ENCODE measurements at regions of chr5 and their contacts with region 1.

Region 1: DNA sequence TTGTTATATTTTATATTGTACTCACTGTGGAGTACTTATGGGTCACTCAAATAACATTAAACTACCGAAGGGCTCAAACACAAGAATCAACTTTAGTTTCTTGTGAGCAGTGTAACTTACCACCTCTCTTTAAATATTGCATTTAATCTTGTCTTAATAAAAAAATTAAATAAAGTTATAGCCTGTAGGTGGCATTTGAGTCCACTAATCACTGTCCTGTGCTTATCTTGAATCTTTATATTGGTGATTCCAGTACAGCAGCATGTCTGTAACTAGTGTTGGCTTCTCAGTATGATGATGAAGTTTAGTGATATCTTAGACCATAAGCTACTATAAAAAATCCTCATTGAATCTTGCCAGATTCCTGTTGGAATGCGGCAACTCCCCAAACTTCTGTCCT is 313.8 kb downstream of the FAM170A start:
- DNase-seq: no peak
- H3K4me3 ChIP-seq: no peak overlapping the region
- H3K27ac ChIP-seq: no peak overlapping the region
- H3K4me1 ChIP-seq: no peaks in the 10 kb centered on the region
- H3K27me3 ChIP-seq: no peaks in the 10 kb centered on the region
- CTCF ChIP-seq: peak in 1 of 3 experiments; percentile 19
- EP300 ChIP-seq: no peak
- POLR2A ChIP-seq: no peak

Region 2: DNA sequence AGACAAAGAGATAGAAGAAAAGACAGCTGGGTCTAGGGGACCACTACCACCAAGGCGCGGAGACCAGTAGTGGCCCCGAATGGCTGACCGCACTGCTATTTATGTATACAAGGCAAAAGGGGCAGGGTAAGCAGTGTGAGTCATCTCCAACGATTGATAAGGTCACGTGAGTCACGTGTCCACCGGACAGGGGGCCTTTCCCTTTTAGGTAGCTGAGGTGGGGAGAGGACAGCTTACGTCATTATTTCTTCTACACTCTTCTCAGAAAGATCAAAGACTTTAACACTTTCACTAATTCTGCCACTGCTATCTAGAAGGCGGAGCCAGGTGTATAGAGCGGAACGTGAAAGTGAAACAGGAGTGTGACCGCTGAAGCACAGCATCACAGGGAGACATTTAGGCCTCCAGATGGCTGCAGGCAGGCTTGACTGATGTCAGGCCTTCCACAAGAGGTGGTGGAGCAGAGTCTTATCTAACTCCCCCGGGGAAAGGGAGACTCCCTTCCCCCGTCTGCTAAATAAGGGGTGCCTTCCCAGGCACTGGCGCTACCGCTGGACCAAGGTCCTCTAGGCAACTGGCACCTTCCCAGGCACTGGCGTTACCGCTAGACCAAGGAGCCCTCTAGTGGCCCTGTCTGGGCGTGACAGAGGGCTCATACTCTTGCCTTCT is 514.8 kb after region 1 on chr5:
- intact Hi-C with region 1: loop called (anchors 10 kb)
- DNase-seq: no peak
- H3K4me3 ChIP-seq: peak overlapping the region; percentile 19 to 50 (median 24)
- H3K27ac ChIP-seq: no peak overlapping the region
- H3K4me1 ChIP-seq: peaks cover 0 to 12% (median 4%) of the 10 kb centered on the region in 4 donors
- H3K27me3 ChIP-seq: peaks cover 0 to 7% (median 0%) of the 10 kb centered on the region in 4 donors
- CTCF ChIP-seq: peak; percentile 44 to 72 (median 52)
- EP300 ChIP-seq: no peak
- POLR2A ChIP-seq: no peak

Measured in esophagus muscularis mucosa (tissue), 4 donors.